Activated CD4-positive, alpha-beta memory T cell treated with anti-CD3 and anti-CD28 coated beads, Interleukin-2, amount 10 ng/mL, durations not matched to agents 7 days and 5 days (primary cell): ENCODE measurements at regions of chr5 and their contacts with region 1.

Region 1: GRCh38 chr5:157130925-157131324 is 11.7 kb downstream of the MED7 start:
- DNase-seq: no peak
- H3K4me3 Mint-ChIP-seq: no peak overlapping the region
- H3K27ac Mint-ChIP-seq: no peak overlapping the region
- H3K4me1 Mint-ChIP-seq: peaks cover 26% of the 10 kb centered on the region
- H3K27me3 Mint-ChIP-seq: peaks cover 2% of the 10 kb centered on the region

Region 2: GRCh38 chr5:156942064-156942463 is 188.9 kb before region 1 on chr5:
- CTCF ChIA-PET with region 1: interaction called, 10 read pairs
- POLR2A ChIA-PET with region 1: interaction called, 4 read pairs
- DNase-seq: peak; percentile 21
- H3K4me3 Mint-ChIP-seq: no peak overlapping the region
- H3K27ac Mint-ChIP-seq: peak overlapping the region; percentile 80
- H3K4me1 Mint-ChIP-seq: peaks cover 21% of the 10 kb centered on the region
- H3K27me3 Mint-ChIP-seq: peaks cover 7% of the 10 kb centered on the region

Region 3: GRCh38 chr5:157004893-157005551 is 125.9 kb before region 1 on chr5:
- CTCF ChIA-PET with region 1: no interaction called
- POLR2A ChIA-PET with region 1: no interaction called
- DNase-seq: no peak
- H3K4me3 Mint-ChIP-seq: no peak overlapping the region
- H3K27ac Mint-ChIP-seq: no peak overlapping the region
- H3K4me1 Mint-ChIP-seq: peaks cover 11% of the 10 kb centered on the region
- H3K27me3 Mint-ChIP-seq: peaks cover 7% of the 10 kb centered on the region

Region 4: GRCh38 chr5:157148734-157149615 is 18.1 kb after region 1 on chr5:
- CTCF ChIA-PET with region 1: no interaction called
- POLR2A ChIA-PET with region 1: no interaction called
- DNase-seq: peak; percentile 85
- H3K4me3 Mint-ChIP-seq: no peak overlapping the region
- H3K27ac Mint-ChIP-seq: peak overlapping the region; percentile 33
- H3K4me1 Mint-ChIP-seq: peaks cover 36% of the 10 kb centered on the region
- H3K27me3 Mint-ChIP-seq: no peaks in the 10 kb centered on the region